Activated CD4-positive, alpha-beta T cell treated with anti-CD3 and anti-CD28 coated beads, Interleukin-2, amount 10 ng/mL, durations not matched to agents 24 days and 14 days (primary cell): ENCODE measurements at regions of chr2 and their contacts with region 1.

Region 1: GRCh38 chr2:218395797-218396687 is 3.6 kb upstream of the CTDSP1 start:
- DNase-seq: peak; percentile 98
- H3K4me3 Mint-ChIP-seq: peak overlapping the region; percentile 83
- H3K27ac Mint-ChIP-seq: peak overlapping the region; percentile 90
- H3K4me1 Mint-ChIP-seq: peaks cover 26% of the 10 kb centered on the region
- H3K27me3 Mint-ChIP-seq: no peaks in the 10 kb centered on the region

Region 2: DNA sequence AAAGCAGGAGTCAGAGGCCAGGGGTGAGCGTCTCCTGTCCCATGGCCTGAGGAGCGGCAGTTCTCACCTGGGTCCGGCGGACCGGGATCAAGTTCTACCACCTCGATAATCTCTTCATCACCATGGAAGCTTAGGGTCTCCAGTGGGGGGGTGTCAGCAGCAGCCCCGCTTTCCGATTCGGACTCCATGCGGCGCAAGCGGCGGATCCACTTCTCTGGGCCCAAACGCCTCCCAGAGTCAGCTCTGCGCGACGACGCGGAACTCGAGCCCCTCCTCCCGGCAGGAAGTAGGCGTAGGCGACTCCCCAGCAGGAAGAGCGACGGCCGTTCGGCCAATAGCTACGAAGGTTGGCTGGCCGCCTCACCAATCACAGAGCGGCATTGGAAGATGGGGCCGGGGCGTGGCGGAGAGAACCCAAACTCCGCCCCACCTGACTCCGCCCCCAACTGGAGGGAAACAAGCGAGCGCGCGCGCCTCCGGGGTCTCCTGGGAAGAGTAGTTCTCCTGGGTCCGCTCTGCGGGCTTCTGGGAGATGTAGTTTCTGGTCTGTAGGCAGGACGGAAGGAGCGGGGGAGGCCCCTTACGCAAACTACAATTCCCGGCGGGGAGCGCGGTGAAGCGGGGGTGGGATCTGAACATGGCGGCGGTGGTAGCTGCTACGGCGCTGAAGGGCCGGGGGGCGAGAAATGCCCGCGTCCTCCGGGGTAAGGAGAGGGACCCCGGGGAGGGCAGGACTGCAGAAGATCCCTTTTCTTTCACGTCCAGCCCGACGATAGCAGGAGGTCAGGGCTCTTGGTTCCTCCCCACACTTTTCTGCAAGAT is 125.9 kb before region 1 on chr2 and contains the starts of genes AAMP and PNKD:
- intact Hi-C with region 1: loop called (anchors 1 kb)
- DNase-seq: peak; percentile 100
- H3K4me3 Mint-ChIP-seq: peak within 1 kb of the TSS; percentile 99
- H3K27ac Mint-ChIP-seq: peak within 1 kb of the TSS; percentile 96
- H3K4me1 Mint-ChIP-seq: peaks cover 39% of the 10 kb centered on the region
- H3K27me3 Mint-ChIP-seq: peaks cover 2% of the 10 kb centered on the region
- total RNA-seq, gene AAMP: 85.3 and 89.0 TPM in 2 replicates
- total RNA-seq, gene PNKD: 15.0 and 21.5 TPM in 2 replicates

Region 3: DNA sequence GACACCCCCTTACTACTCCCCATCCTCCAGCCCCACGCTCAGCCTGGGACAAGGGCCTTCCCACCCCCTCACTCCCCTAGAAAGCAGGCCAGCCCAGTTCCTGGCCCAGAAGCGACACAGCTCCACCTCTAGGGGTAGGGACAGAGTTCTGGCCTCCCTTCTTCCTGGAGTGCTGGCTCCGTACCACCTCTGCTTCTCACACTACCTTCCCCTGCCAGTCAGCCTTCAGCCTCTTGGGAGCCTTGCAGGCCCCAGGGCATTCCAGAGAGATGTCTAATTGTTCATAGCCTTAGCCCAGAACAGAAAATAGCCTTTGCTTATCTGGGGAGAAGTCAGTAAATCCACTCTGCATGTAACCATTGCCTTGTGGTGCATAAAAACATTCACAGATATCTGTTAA is 52.5 kb before region 1 on chr2:
- intact Hi-C with region 1: no loop called
- DNase-seq: no peak
- H3K4me3 Mint-ChIP-seq: no peak overlapping the region
- H3K27ac Mint-ChIP-seq: no peak overlapping the region
- H3K4me1 Mint-ChIP-seq: no peaks in the 10 kb centered on the region
- H3K27me3 Mint-ChIP-seq: peaks cover 2% of the 10 kb centered on the region

Region 4: GRCh38 chr2:218367415-218368153 is 28.5 kb before region 1 on chr2:
- intact Hi-C with region 1: loop called (anchors 2 kb)
- DNase-seq: peak; percentile 92
- H3K4me3 Mint-ChIP-seq: peak overlapping the region; percentile 80
- H3K27ac Mint-ChIP-seq: peak overlapping the region; percentile 76
- H3K4me1 Mint-ChIP-seq: peaks cover 4% of the 10 kb centered on the region
- H3K27me3 Mint-ChIP-seq: peaks cover 29% of the 10 kb centered on the region

Region 5: DNA sequence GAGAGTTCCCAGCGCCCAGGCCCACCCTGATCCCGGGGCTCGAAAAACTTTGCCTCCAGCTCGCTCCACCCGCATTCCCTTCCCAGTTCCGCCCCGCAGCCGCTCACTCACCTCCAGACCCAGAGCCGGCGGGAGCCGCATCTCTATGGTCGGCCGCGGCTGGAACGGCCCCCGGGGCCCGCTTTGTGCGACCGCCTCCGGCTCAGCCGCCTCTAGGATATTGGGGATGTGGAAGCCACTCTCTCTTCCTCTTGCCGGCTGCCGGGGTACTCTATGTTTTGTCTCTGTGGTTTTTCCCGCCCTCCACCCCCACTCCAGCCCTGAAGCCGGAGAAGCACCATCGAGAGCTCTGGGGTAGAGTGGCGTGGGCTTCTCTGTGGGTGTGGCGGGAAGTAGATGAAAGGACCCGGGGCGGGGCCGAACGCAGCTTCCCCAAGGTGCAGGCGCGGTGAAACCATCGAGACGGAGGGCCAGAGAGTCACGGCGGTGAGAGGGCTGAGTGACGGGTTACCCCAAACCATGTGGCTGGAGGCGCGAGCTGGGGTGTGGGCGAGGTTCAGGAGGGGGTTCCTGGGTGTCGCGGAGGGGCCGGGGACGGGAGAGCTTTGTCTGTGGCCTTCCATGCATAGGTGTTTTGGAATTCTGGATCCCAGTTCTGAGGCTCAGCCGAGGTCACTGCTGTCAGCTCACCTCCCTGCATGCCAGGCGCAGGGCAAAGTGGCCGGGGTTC is 263.4 kb after region 1 on chr2 and contains the starts of genes BCS1L and ZNF142:
- intact Hi-C with region 1: loop called (anchors 2 kb)
- DNase-seq: peak; percentile 98
- H3K4me3 Mint-ChIP-seq: peak within 1 kb of the TSS; percentile 98
- H3K27ac Mint-ChIP-seq: peak within 1 kb of the TSS; percentile 95
- H3K4me1 Mint-ChIP-seq: peaks cover 31% of the 10 kb centered on the region
- H3K27me3 Mint-ChIP-seq: no peaks in the 10 kb centered on the region
- total RNA-seq, gene BCS1L: 92.9 and 94.4 TPM in 2 replicates
- total RNA-seq, gene ZNF142: 59.6 and 60.9 TPM in 2 replicates

Region 6: GRCh38 chr2:218898109-218898878 is 502.3 kb after region 1 on chr2:
- intact Hi-C with region 1: loop called (anchors 5 kb)
- DNase-seq: peak; percentile 94
- H3K4me3 Mint-ChIP-seq: peak overlapping the region; percentile 76
- H3K27ac Mint-ChIP-seq: peak overlapping the region; percentile 83
- H3K4me1 Mint-ChIP-seq: peaks cover 42% of the 10 kb centered on the region
- H3K27me3 Mint-ChIP-seq: peaks cover 61% of the 10 kb centered on the region